ENCODE measurements at regions of chr3 and their contacts with region 1.

Region 1: DNA sequence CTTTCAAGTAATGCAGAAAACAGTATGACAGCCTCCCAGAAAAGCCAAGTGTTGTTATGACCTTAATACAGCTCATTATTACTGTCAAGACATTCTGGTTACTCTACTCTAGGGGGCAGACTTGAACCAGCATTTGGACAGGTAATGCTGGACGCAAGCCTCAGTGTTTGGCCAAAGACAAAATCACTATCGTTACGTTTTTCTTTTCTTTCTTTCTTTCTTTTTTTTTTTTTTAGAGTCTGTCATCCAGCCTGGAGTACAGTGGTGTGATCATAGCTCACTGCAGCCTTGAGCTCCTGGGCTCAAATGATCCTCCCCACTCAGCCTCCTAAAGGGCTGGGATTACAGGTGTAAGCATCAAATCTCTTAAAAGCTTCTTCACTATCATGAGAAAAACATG is 29.4 kb upstream of the TMEM45A start:
- DNase-seq: peak; percentile 43 to 72
- H3K4me3 ChIP-seq: no peak overlapping the region
- H3K27ac ChIP-seq: no peak overlapping the region
- H3K4me1 ChIP-seq: no peaks in the 10 kb centered on the region
- H3K27me3 ChIP-seq: no peaks in the 10 kb centered on the region
- CTCF ChIP-seq: peak; percentile 98

Region 2: GRCh38 chr3:99952306-99952705 is 510.7 kb before region 1 on chr3:
- CTCF ChIA-PET with region 1: no interaction called
- POLR2A ChIA-PET with region 1: no interaction called
- intact Hi-C with region 1: no loop called
- DNase-seq: no peak
- H3K4me3 ChIP-seq: no peak overlapping the region
- H3K27ac ChIP-seq: no peak overlapping the region
- H3K4me1 ChIP-seq: no peaks in the 10 kb centered on the region
- H3K27me3 ChIP-seq: no peaks in the 10 kb centered on the region
- CTCF ChIP-seq: no peak

Region 3: GRCh38 chr3:100492059-100493006 is 29.3 kb after region 1 on chr3 and contains the start of gene TMEM45A:
- CTCF ChIA-PET with region 1: interaction called, 11 read pairs
- POLR2A ChIA-PET with region 1: interaction called, 14 read pairs
- intact Hi-C with region 1: no loop called
- DNase-seq: peak; percentile 89 to 100
- H3K4me3 ChIP-seq: peak within 1 kb of the TSS; percentile 79
- H3K27ac ChIP-seq: 0 out of 2 replicates have a peak within 1 kb of the TSS, but pooled peaks have one; percentile 7
- H3K4me1 ChIP-seq: peaks cover 28% of the 10 kb centered on the region
- H3K27me3 ChIP-seq: no peaks in the 10 kb centered on the region
- CTCF ChIP-seq: no peak
- total RNA-seq, gene TMEM45A: 21.6 and 31.1 TPM in 2 replicates

Region 4: DNA sequence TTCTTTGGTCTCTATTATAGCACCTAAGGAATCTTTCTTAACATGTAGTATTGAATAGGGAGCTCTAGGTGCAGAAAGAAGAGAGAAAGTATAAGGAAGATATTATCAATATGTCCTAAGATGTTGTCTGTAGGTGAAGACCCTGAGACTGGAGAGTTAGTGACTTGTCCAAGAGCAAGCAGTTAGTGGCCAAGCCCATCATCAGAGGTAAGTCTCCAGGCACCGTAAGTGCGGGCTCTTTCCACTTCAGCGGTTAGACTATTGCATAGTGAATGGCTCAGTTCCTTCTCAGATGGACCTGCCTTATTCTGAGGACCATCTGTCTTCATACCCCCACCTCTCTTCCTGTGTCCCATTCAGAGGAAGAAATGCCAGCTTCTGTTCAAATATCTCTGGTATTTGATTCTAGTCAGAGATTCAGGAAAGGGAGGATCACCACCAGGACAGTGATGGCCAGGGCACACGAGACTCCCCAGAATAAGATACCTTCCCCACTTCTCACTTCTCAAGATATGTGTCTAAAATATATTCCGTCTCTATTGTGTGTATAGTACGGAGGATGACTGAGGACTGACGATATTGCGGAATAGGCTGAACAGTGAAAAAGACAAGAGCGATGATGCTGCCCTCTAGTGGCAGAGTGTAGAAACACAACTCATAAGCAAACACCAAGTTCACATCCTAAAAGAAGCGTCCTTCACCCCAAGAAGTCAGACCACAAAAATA is 127.3 kb after region 1 on chr3:
- CTCF ChIA-PET with region 1: interaction called, 87 read pairs
- POLR2A ChIA-PET with region 1: no interaction called
- intact Hi-C with region 1: loop called (anchors 1 kb)
- DNase-seq: peak; percentile 62 to 64
- H3K4me3 ChIP-seq: peak overlapping the region; percentile 21; the same call in 1 of the 2 replicates
- H3K27ac ChIP-seq: no peak overlapping the region
- H3K4me1 ChIP-seq: 0 out of 2 replicates have a peak, but pooled peaks cover 4% of the 10 kb centered on the region
- H3K27me3 ChIP-seq: no peaks in the 10 kb centered on the region
- CTCF ChIP-seq: peak; percentile 100

Region 5: GRCh38 chr3:100630664-100631063 is 167.7 kb after region 1 on chr3:
- CTCF ChIA-PET with region 1: interaction called, 6 read pairs
- POLR2A ChIA-PET with region 1: interaction called, 12 read pairs
- intact Hi-C with region 1: no loop called
- DNase-seq: peak in 1 of 2 experiments; percentile 31
- H3K4me3 ChIP-seq: no peak overlapping the region
- H3K27ac ChIP-seq: no peak overlapping the region
- H3K4me1 ChIP-seq: no peaks in the 10 kb centered on the region
- H3K27me3 ChIP-seq: no peaks in the 10 kb centered on the region
- CTCF ChIP-seq: no peak

Region 6: DNA sequence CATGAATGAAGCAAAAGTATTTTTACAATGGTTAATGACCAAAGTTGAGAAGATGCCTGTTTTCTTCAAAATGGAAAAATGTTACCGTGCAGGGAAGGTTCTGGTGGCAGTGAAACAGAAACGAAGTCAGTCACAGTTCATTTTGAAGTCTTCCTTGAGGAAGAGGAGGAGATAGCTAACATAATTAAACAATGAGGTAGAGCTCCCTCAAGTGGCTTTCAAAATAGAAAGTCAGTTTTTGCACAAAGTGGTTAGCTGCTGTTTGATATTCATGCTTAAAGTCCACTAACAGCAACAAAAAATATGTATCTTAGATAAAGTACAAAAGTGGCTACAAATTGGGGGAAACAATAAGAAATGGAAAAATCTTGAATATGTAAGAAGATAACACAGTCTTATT is 333.6 kb after region 1 on chr3:
- CTCF ChIA-PET with region 1: interaction called, 4 read pairs
- POLR2A ChIA-PET with region 1: no interaction called
- intact Hi-C with region 1: loop called (anchors 1 kb)
- DNase-seq: no peak
- H3K4me3 ChIP-seq: no peak overlapping the region
- H3K27ac ChIP-seq: no peak overlapping the region
- H3K4me1 ChIP-seq: no peaks in the 10 kb centered on the region
- H3K27me3 ChIP-seq: no peaks in the 10 kb centered on the region
- CTCF ChIP-seq: peak; percentile 46; the same call in 1 of the 2 replicates

Region 7: GRCh38 chr3:101381809-101382208 is 918.8 kb after region 1 on chr3:
- CTCF ChIA-PET with region 1: interaction called, 5 read pairs
- POLR2A ChIA-PET with region 1: no interaction called
- intact Hi-C with region 1: loop called (anchors 1 kb)
- DNase-seq: peak in 1 of 2 experiments; percentile 46
- H3K4me3 ChIP-seq: no peak overlapping the region
- H3K27ac ChIP-seq: no peak overlapping the region
- H3K4me1 ChIP-seq: no peaks in the 10 kb centered on the region
- H3K27me3 ChIP-seq: no peaks in the 10 kb centered on the region
- CTCF ChIP-seq: peak; percentile 83

Measured in PC-9 (cell line).